ENCODE measurements at regions of chr6 and their contacts with region 1.

Region 1: DNA sequence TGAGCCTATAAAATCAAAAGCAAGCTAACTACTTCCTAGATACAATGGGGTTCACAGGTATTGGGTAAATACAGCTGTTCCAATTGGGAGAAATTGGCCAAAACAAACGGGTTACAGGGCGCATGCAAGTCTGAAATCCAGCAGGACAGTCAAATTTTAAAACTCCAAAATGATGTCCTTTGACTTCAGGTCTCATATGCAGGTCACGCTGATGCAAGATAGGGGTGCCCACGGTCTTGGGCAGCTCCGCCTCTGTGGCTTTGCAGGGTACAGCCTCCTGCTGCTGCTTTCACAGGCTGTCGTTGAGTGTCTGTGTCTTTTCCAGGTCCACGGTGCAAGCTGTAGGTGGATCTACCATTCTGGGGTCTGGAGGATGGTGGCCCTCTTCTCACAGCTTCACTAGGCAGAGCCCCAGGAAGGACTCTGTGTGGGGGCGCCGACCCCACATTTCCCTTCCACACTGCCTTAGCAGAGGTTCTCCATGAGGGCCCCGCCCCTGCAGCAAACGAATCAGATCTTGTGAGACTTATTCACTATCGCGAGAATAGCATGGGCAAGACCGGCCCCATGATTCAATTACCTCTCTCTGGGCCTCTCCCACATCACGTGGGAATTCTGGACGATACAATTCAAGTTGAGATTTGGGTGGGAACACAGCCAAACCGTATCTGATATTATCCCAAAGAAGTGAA is 11.9 kb upstream of the SMIM29 start:
- DNase-seq: no peak
- ATAC-seq: no peak
- H3K4me3 ChIP-seq: no peak overlapping the region
- H3K4me3 Mint-ChIP-seq: no peak overlapping the region
- H3K27ac ChIP-seq: no peak overlapping the region
- H3K27ac Mint-ChIP-seq: no peak overlapping the region
- H3K4me1 ChIP-seq: no peaks in the 10 kb centered on the region
- H3K4me1 Mint-ChIP-seq: no peaks in the 10 kb centered on the region
- H3K27me3 ChIP-seq: no peaks in the 10 kb centered on the region
- H3K27me3 Mint-ChIP-seq: no peaks in the 10 kb centered on the region
- CTCF ChIP-seq: no peak

Region 2: GRCh38 chr6:34332251-34333198 is 71.8 kb after region 1 on chr6:
- CTCF ChIA-PET with region 1: no interaction called
- POLR2A ChIA-PET with region 1: no interaction called
- intact Hi-C with region 1: loop called in 1 of 2 experiments (anchors 10 kb)
- DNase-seq: no peak
- ATAC-seq: no peak
- H3K4me3 ChIP-seq: no peak overlapping the region
- H3K4me3 Mint-ChIP-seq: no peak overlapping the region
- H3K27ac ChIP-seq: no peak overlapping the region
- H3K27ac Mint-ChIP-seq: peak overlapping the region; percentile 52
- H3K4me1 ChIP-seq: no peaks in the 10 kb centered on the region
- H3K4me1 Mint-ChIP-seq: peaks cover 9% of the 10 kb centered on the region
- H3K27me3 ChIP-seq: no peaks in the 10 kb centered on the region
- H3K27me3 Mint-ChIP-seq: no peaks in the 10 kb centered on the region
- CTCF ChIP-seq: no peak

Region 3: DNA sequence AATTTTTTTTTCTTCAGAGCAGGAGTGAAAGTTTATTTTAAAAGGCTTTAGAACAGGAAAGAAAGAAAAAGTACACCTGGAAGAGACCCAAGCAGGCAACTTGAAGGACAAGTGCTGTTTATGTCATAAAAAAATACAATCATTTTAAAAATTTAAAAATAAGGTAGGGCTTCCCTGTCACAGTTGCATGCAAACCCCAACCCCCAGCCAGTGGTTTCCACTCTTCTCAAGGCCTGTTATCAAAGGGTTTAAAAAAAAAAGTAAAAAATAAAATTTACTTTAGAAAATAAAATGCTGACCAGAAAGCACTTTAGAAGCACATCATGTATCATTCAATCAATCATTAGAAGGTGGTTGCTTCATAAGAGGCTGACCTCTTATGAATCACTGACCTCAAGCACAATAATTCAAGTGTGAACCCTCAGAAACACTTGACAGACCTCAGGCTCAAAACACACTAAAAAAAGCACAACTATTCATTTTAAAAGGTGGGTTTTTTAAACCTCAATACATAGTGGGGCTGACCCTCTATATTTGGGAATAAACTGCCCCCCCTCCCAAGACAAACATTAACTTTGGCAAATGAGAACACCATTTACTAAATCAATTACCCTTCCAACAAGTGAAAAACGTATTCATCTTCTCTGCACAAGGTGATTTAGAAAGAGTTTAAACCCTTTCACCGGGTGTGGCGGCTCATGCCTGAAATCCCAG is 420.2 kb after region 1 on chr6:
- CTCF ChIA-PET with region 1: no interaction called
- POLR2A ChIA-PET with region 1: no interaction called
- intact Hi-C with region 1: no loop called
- DNase-seq: peak in 3 of 9 experiments; percentile 22 to 26 (median 24)
- ATAC-seq: no peak
- H3K4me3 ChIP-seq: no peak overlapping the region
- H3K4me3 Mint-ChIP-seq: no peak overlapping the region
- H3K27ac ChIP-seq: peak overlapping the region in 1 of 2 experiments; percentile 10
- H3K27ac Mint-ChIP-seq: no peak overlapping the region
- H3K4me1 ChIP-seq: peaks cover 18% of the 10 kb centered on the region
- H3K4me1 Mint-ChIP-seq: peaks cover 51% of the 10 kb centered on the region
- H3K27me3 ChIP-seq: no peaks in the 10 kb centered on the region
- H3K27me3 Mint-ChIP-seq: no peaks in the 10 kb centered on the region
- CTCF ChIP-seq: no peak

Region 4: DNA sequence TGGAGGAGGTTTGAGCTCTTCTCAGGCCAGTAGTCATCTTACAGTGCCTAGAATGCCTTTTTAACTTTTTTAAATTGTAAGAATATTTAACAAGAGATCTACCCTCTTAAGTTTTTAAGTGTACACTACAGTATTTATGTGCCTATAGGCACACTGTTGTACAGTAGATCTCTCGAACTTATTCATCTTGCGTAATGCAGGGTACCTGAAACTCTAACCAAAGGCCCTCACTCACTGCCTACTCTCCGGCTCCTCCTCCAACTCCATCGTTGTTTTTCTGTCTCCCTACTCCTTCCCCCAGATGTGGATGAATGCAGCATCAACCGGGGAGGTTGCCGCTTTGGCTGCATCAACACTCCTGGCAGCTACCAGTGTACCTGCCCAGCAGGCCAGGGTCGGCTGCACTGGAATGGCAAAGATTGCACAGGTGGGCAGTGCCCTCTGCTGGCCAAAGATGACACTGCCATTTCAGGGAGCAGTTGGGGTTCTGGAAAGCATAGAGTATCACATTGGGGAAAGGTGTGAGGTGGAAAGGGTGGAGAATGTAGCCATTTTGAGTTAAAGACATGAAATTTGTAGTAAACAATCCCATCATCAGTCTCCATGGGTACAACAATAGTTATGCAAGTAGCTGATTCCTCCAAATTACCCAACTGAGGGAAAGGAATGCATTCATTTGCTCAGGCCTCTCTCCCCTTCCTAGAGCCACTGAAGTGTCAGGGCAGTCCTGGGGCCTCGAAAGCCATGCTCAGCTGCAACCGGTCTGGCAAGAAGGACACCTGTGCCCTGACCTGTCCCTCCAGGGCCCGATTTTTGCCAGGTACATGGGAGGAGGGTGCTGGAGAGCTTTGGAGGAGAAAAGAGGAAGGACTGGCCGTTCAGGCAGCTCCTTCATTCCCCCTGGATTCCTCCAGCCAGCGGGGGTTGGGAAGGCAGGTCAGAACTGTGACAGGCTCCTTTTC is 980.4 kb after region 1 on chr6:
- CTCF ChIA-PET with region 1: no interaction called
- POLR2A ChIA-PET with region 1: no interaction called
- intact Hi-C with region 1: no loop called
- DNase-seq: peak; percentile 56 to 83 (median 72)
- ATAC-seq: peak; percentile 90
- H3K4me3 ChIP-seq: no peak overlapping the region
- H3K4me3 Mint-ChIP-seq: no peak overlapping the region
- H3K27ac ChIP-seq: no peak overlapping the region
- H3K27ac Mint-ChIP-seq: no peak overlapping the region
- H3K4me1 ChIP-seq: no peaks in the 10 kb centered on the region
- H3K4me1 Mint-ChIP-seq: peaks cover 3% of the 10 kb centered on the region
- H3K27me3 ChIP-seq: no peaks in the 10 kb centered on the region
- H3K27me3 Mint-ChIP-seq: no peaks in the 10 kb centered on the region
- CTCF ChIP-seq: peak; percentile 100

Region 5: GRCh38 chr6:36160147-36160760 is 1899.5 kb after region 1 on chr6:
- CTCF ChIA-PET with region 1: no interaction called
- POLR2A ChIA-PET with region 1: no interaction called
- intact Hi-C with region 1: no loop called
- DNase-seq: no peak
- ATAC-seq: no peak
- H3K4me3 ChIP-seq: no peak overlapping the region
- H3K4me3 Mint-ChIP-seq: no peak overlapping the region
- H3K27ac ChIP-seq: no peak overlapping the region
- H3K27ac Mint-ChIP-seq: no peak overlapping the region
- H3K4me1 ChIP-seq: no peaks in the 10 kb centered on the region
- H3K4me1 Mint-ChIP-seq: no peaks in the 10 kb centered on the region
- H3K27me3 ChIP-seq: no peaks in the 10 kb centered on the region
- H3K27me3 Mint-ChIP-seq: no peaks in the 10 kb centered on the region
- CTCF ChIP-seq: no peak